Heart right ventricle (tissue), 16 donors: ENCODE measurements at regions of chr1 and their contacts with region 1.

Region 1: DNA sequence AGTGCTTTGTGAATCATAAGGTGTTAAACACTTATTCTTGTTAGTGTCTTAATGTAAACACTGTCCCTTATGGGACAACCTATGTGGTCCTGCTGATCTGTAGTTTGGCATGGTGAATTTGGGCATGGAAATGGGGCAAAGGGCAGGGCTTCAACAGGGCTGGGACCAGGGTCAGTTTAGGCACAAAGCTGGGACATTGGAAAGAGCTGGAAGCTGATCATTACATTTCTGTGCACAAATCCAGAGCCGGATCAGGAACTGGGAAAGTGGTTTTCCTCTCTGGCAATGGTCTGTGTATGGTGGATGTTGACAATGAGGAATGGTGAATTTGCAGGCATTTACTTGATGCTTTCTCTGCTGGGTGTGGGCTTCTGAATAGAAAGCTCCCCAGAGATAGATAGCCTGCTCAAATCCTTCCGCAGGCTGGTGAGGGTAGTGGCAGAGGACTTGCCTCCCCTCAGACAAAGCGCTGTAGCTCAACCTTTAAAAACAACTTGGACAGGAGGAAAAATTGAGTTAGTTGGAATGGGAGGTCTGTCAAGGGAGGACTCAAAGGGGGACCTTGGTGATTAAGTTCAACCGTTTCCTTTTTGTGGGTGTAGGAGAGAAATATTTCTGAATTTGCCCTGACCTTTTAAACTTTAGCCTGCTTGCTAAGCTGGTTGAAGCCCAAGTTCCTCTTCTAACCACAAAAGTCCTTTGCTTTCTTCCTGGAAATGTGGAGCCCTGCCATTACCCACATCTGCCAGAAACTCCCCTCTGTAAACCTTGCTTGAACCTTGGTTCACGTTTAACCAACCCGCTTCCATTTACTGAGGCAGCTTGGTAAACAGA is 35.3 kb downstream of the HLX start:
- DNase-seq: no peak
- ATAC-seq: peak in 1 of 8 donors; percentile 25
- H3K4me3 ChIP-seq: no peak overlapping the region
- H3K27ac ChIP-seq: no peak overlapping the region
- H3K4me1 ChIP-seq: peaks cover 0 to 24% (median 0%) of the 10 kb centered on the region in 9 donors
- H3K27me3 ChIP-seq: peaks cover 0 to 4% (median 0%) of the 10 kb centered on the region in 7 donors
- CTCF ChIP-seq: no peak

Region 2: GRCh38 chr1:221074301-221074700 is 159.8 kb after region 1 on chr1:
- intact Hi-C with region 1: loop called in 1 of 10 experiments (anchors 10 kb)
- DNase-seq: no peak
- ATAC-seq: no peak
- H3K4me3 ChIP-seq: no peak overlapping the region
- H3K27ac ChIP-seq: peak overlapping the region in 1 of 10 donors; percentile 23
- H3K4me1 ChIP-seq: peaks cover 0 to 57% (median 0%) of the 10 kb centered on the region in 9 donors
- H3K27me3 ChIP-seq: no peaks in the 10 kb centered on the region
- CTCF ChIP-seq: no peak

Region 3: DNA sequence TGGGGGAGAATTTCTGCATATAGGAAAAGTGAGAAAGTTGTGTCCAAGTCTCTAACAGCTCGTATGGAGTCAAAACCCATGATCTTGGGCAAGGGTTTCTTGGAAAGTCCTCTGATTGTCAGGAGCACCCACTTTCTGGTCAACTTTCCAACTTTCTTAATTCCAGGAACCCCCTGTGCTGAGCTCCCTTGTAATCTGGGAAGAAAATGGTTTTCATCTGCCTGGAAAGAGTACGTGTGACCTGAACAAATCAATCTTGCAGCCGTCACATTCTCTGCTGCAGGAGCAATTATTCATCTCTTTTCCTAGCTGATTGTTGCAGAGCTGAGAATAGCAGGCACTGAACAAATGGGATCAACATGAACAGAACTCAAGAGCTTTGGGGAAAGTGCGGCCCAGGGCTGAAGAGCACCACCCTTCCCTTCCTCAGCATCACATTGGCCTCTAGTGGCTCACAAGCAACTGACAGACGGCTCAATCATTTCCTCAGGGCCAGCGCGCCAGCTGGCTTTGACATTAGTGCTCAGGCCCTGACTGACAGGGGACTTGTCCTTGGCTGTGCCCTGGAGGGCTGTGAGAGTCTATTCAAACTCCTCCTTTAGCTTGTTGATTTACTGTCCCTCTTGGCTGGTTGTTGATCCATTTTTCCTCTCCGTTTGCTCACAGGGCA is 260.0 kb after region 1 on chr1:
- intact Hi-C with region 1: loop called in 6 of 10 experiments (anchors 2 to 10 kb)
- DNase-seq: peak; percentile 79 to 82
- ATAC-seq: peak; percentile 97 to 99 (median 99)
- H3K4me3 ChIP-seq: no peak overlapping the region
- H3K27ac ChIP-seq: peak overlapping the region in 5 of 10 donors; percentile 8 to 49 (median 26)
- H3K4me1 ChIP-seq: peaks cover 4 to 15% (median 11%) of the 10 kb centered on the region in 9 donors
- H3K27me3 ChIP-seq: no peaks in the 10 kb centered on the region
- CTCF ChIP-seq: peak; percentile 36 to 69 (median 56)